Dendritic cell treated with granulocyte-macrophage colony-stimulating factor and Interleukin-4, amounts not matched to agents 40 ng/mL and 50 ng/mL, for 4 days (primary cell): ENCODE measurements at regions of chr1 and their contacts with region 1.

Region 1: GRCh38 chr1:153977250-153978240 is at the start of gene JTB:
- H3K4me3 Mint-ChIP-seq: peak within 1 kb of the TSS; percentile 98
- H3K27ac Mint-ChIP-seq: peak within 1 kb of the TSS; percentile 95
- H3K4me1 Mint-ChIP-seq: peaks cover 71% of the 10 kb centered on the region
- H3K27me3 Mint-ChIP-seq: no peaks in the 10 kb centered on the region

Region 2: GRCh38 chr1:153967082-153968000 is 10.2 kb before region 1 on chr1 and contains the start of gene CREB3L4:
- intact Hi-C with region 1: loop called (anchors 1 kb)
- H3K4me3 Mint-ChIP-seq: peak within 1 kb of the TSS; percentile 97
- H3K27ac Mint-ChIP-seq: peak within 1 kb of the TSS; percentile 95
- H3K4me1 Mint-ChIP-seq: peaks cover 47% of the 10 kb centered on the region
- H3K27me3 Mint-ChIP-seq: no peaks in the 10 kb centered on the region